ENCODE measurements at regions of chr2 and their contacts with region 1.

Region 1: DNA sequence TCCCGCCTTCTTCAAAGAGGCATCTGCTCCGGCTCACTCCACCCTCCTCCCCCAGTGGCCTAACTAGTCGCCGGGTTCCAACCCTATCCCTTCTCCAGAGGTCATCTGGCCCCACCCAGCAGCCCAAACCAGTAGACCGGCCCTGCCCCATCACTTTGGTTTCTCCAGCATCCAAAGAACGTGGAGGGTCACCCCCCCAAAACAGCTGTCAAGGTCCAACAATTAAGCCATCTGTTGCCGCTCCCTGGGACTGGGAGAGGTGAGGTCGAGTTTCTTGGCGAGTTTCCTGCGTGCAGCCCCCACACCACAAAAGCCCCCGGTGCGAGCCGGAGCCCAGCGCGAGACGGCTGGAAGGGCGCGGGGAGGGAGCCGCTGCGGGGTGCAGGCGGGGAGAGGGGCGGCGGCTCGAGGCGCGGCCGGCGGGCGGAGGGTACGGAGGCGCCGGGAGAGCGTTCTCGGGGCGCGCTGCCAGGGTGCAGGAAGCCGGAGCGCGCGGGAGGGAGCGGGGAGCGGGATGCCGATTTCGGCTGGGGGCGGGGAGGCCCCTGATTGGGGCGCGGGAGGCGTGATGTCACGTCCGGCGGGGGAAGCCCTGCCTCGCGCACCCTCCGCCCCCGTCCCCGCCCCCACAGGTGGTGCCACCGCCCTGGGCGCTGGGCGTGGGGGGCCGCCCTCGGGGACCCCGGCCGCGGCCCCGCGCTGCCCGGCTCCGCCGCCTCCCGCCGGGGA is 571 bp upstream of the GPC1 start:
- DNase-seq: peak; percentile 88
- H3K4me3 Mint-ChIP-seq: peak overlapping the region; percentile 74
- H3K27ac Mint-ChIP-seq: no peak overlapping the region
- H3K4me1 Mint-ChIP-seq: peaks cover 8% of the 10 kb centered on the region
- H3K27me3 Mint-ChIP-seq: peaks cover 20% of the 10 kb centered on the region

Region 2: GRCh38 chr2:238895891-238896600 is 1538.8 kb before region 1 on chr2:
- CTCF ChIA-PET with region 1: no interaction called
- intact Hi-C with region 1: no loop called
- DNase-seq: no peak
- H3K4me3 Mint-ChIP-seq: no peak overlapping the region
- H3K27ac Mint-ChIP-seq: no peak overlapping the region
- H3K4me1 Mint-ChIP-seq: no peaks in the 10 kb centered on the region
- H3K27me3 Mint-ChIP-seq: peaks cover 4% of the 10 kb centered on the region

Region 3: DNA sequence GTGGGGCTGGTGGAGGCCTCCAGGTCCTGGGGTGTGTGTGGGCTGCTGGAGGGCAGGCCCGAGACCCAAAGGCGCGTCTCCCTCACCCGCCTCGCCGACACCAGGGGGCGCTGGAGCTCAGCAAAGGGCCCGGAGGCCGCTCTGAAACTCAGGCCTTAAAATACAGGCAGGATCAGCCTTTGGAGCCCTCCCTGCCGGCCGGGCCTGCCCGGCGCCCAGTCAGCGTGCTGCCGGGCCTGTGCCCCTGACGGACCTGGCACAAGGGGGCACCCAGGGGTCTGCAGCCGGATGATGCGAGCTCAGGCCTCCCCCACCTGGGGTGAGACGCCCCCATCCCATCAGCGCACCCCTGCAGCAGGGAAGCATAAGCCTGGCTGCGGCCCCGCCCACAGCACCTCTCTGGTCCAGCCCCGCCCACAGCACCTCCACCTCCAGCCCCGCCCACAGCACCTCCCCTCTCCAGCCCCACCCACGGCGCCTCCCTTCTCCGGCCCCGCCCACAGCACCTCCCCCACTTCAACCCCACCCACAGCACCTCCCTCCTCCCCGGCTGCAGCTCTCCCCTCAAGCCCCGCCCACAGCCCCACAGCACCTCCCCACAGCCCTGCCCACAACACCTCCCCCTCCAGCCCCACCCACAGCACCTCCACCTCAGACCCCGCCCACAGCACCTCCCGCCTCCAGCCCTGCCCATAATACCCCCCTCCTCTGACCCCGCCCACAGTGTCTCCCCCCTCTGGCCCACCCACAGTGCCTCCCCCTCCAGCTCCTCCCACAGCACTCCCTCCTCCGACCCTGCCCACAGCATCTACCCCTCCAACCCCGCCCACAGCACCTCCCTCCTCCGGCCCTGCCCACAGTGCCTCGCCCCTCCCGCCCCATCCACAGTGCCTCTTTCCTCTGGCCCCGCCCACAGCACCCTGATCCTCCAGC is 201.7 kb before region 1 on chr2:
- CTCF ChIA-PET with region 1: interaction called, 11 read pairs
- intact Hi-C with region 1: loop called (anchors 1 kb)
- DNase-seq: peak; percentile 82
- H3K4me3 Mint-ChIP-seq: no peak overlapping the region
- H3K27ac Mint-ChIP-seq: no peak overlapping the region
- H3K4me1 Mint-ChIP-seq: peaks cover 2% of the 10 kb centered on the region
- H3K27me3 Mint-ChIP-seq: peaks cover 7% of the 10 kb centered on the region

Region 4: DNA sequence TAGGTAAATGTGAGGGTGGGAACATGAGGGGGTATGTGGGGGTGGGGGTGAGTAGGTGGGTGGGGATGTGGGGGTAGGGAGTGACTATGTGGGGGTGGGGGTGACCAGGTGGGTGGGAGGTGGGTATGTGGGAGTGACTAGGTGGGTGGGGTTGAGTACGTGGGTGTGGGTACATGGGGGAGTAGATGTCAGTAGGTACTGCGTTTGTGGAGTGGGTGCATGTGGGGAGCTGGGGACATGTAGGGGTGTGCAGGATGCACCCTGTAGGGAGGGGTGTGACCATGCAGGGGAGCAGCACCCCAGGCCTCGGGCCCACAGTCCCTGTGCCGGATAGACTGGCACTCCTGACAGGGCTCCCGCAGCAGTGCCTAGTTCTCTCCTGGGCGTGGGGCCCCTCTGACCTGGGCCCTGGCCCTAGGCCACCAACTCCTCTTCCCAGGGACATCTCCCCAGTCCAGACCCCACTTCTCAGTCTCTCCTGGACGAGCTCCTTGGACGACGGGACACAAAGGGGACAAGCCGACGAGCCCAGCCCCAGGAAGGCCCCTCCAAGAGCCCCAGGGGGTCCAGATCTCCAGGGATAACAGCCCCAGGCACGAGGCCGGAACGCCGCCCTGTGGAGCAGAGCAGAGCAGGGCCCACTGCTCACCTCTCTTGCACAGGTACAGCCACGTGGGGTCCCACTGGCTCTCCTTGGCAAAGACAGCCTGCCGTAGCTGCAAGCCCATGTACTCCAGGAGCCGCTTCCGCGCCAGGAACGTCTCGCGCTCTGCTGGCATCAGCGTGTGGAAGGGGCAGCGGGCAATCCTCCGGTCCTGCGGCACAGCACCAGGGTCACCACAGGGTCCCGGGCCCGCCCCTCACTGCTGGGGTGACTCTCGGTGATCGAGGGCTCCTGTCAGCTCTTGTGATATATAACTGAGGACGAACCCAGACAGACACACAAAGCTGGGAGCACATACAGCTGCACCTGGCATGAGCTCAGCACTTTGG is 64.7 kb after region 1 on chr2:
- CTCF ChIA-PET with region 1: no interaction called
- intact Hi-C with region 1: no loop called
- DNase-seq: no peak
- H3K4me3 Mint-ChIP-seq: no peak overlapping the region
- H3K27ac Mint-ChIP-seq: no peak overlapping the region
- H3K4me1 Mint-ChIP-seq: no peaks in the 10 kb centered on the region
- H3K27me3 Mint-ChIP-seq: no peaks in the 10 kb centered on the region

Region 5: GRCh38 chr2:240655931-240656886 is 221.3 kb after region 1 on chr2:
- CTCF ChIA-PET with region 1: no interaction called
- intact Hi-C with region 1: no loop called
- DNase-seq: peak; percentile 19
- H3K4me3 Mint-ChIP-seq: no peak overlapping the region
- H3K27ac Mint-ChIP-seq: no peak overlapping the region
- H3K4me1 Mint-ChIP-seq: peaks cover 5% of the 10 kb centered on the region
- H3K27me3 Mint-ChIP-seq: peaks cover 17% of the 10 kb centered on the region